WTC11 (cell line): ENCODE measurements at regions of chr4 and their contacts with region 1.

Region 1: DNA sequence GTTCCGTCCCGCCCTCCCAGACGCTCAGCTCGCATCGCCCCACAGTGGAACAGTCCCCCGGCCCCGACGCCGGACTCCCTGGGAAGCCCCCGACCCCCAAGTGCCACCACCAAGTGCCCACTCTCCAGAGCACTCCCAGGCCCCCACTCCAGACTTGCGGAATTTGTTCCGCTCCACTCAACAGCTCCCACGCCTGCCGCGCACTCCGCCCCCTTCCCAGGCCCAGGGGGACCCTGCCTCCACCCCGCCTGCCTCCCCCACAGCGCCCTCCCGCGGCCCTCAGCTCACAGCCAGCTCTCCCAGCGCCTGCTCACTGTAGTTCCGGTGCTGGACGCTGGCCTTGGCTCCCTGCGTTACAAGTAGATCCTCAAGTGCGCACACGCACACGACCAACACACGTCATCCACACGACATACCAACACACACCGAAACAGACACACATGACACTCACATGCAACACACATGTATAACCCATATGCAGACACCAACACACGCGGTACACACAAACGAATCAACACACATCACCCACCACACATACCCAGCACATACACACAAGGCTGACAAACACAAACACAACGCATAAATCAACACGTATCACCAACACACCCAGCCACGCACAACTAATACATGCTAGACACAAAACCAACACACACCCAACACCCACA is 8.0 kb downstream of the MSX1 start:
- DNase-seq: peak; percentile 83
- ATAC-seq: peak; percentile 46
- H3K4me3 Mint-ChIP-seq: no peak overlapping the region
- H3K27ac Mint-ChIP-seq: no peak overlapping the region
- H3K4me1 Mint-ChIP-seq: peaks cover 56% of the 10 kb centered on the region
- H3K27me3 Mint-ChIP-seq: no peaks in the 10 kb centered on the region; the same call in 1 of the 2 replicates
- CTCF ChIP-seq: peak; percentile 43; the same call in 1 of the 2 replicates

Region 2: DNA sequence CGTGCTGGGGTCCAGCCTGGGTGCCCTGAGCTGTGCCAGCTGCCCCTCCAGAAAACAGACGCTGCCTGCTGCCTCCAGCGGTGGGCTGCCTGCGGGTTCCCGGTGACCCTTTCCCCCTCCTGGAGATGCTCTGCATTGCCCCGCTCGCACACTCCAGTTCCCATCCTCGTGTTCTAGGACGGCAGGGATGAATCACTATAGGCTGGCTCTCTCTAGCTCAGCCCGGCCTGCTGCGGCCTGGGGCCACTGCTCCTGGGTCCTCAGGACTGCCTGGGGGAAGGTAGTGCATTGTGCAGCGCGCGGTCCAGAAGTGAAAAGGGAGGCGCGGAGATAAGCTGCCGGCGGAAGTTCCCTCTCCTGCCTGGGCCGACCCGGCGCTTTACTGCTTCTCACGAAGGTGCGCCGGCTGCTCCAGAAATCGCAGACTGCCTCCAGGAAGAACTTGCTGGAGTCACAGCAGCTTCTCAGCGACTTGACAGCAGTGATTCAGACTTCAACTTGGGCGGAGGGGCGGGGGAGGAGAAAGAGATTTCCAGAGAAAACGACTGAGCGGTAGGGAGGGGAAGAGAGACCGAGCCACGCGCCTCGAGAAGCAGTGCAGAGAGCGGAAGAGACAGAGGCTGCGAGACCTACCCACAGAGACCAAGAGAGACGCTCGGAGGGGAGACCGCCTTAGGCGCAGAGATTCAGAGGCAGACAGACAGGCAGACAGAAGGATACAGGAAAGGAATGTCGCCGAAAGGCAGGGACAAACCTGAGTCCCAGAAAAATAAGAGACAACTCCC is 14.7 kb before region 1 on chr4:
- CTCF ChIA-PET with region 1: interaction called, 12 read pairs
- POLR2A ChIA-PET with region 1: interaction called, 4 read pairs
- DNase-seq: peak; percentile 69
- ATAC-seq: peak; percentile 75
- H3K4me3 Mint-ChIP-seq: peak overlapping the region; percentile 65
- H3K27ac Mint-ChIP-seq: no peak overlapping the region
- H3K4me1 Mint-ChIP-seq: peaks cover 37% of the 10 kb centered on the region
- H3K27me3 Mint-ChIP-seq: peaks cover 99% of the 10 kb centered on the region
- CTCF ChIP-seq: no peak

Region 3: GRCh38 chr4:4880492-4880891 is 13.0 kb after region 1 on chr4:
- CTCF ChIA-PET with region 1: interaction called, 10 read pairs
- POLR2A ChIA-PET with region 1: no interaction called
- DNase-seq: no peak
- ATAC-seq: no peak
- H3K4me3 Mint-ChIP-seq: no peak overlapping the region
- H3K27ac Mint-ChIP-seq: no peak overlapping the region
- H3K4me1 Mint-ChIP-seq: peaks cover 4% of the 10 kb centered on the region; the same call in 1 of the 2 replicates
- H3K27me3 Mint-ChIP-seq: peaks cover 53% of the 10 kb centered on the region
- CTCF ChIP-seq: no peak